WTC11 (cell line): ENCODE measurements at regions of chr14 and their contacts with region 1.

Region 1: GRCh38 chr14:67446120-67447032 is 34.4 kb upstream of the PLEK2 start:
- DNase-seq: no peak
- ATAC-seq: no peak
- H3K4me3 Mint-ChIP-seq: no peak overlapping the region
- H3K27ac Mint-ChIP-seq: no peak overlapping the region
- H3K4me1 Mint-ChIP-seq: peaks cover 53% of the 10 kb centered on the region
- H3K27me3 Mint-ChIP-seq: peaks cover 9% of the 10 kb centered on the region; the same call in 1 of the 2 replicates
- CTCF ChIP-seq: no peak

Region 2: DNA sequence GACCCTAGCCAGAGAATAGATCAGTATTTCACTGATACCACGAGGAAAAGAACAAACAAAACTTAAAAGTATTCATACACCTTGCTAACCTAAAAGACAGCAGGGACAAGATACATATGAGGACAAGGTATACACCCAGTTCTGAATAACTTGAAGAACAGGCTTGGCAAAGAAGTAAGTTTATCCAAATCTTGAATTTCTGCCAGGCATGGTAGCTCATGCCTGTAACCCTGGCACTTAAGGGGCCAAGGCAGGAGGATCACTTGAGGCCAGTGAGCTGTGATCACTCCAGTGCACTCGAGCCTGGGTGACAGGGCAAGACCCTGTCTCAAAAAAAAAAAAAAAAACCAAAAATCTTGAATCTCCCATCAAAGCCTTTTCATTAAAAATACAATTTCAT is 61.3 kb before region 1 on chr14:
- CTCF ChIA-PET with region 1: no interaction called
- POLR2A ChIA-PET with region 1: no interaction called
- DNase-seq: no peak
- ATAC-seq: no peak
- H3K4me3 Mint-ChIP-seq: no peak overlapping the region
- H3K27ac Mint-ChIP-seq: no peak overlapping the region
- H3K4me1 Mint-ChIP-seq: no peaks in the 10 kb centered on the region
- H3K27me3 Mint-ChIP-seq: no peaks in the 10 kb centered on the region
- CTCF ChIP-seq: no peak

Region 3: GRCh38 chr14:67435615-67436346 is 10.6 kb before region 1 on chr14:
- CTCF ChIA-PET with region 1: interaction called, 13 read pairs
- POLR2A ChIA-PET with region 1: no interaction called
- DNase-seq: no peak
- ATAC-seq: no peak
- H3K4me3 Mint-ChIP-seq: no peak overlapping the region
- H3K27ac Mint-ChIP-seq: no peak overlapping the region
- H3K4me1 Mint-ChIP-seq: no peaks in the 10 kb centered on the region
- H3K27me3 Mint-ChIP-seq: no peaks in the 10 kb centered on the region
- CTCF ChIP-seq: no peak

Region 4: GRCh38 chr14:67457782-67458181 is 11.4 kb after region 1 on chr14:
- CTCF ChIA-PET with region 1: interaction called, 12 read pairs
- POLR2A ChIA-PET with region 1: no interaction called
- DNase-seq: peak; percentile 61
- ATAC-seq: peak; percentile 96
- H3K4me3 Mint-ChIP-seq: no peak overlapping the region
- H3K27ac Mint-ChIP-seq: 0 out of 2 replicates have a peak overlapping the region, but pooled peaks have one; percentile 36
- H3K4me1 Mint-ChIP-seq: peaks cover 18% of the 10 kb centered on the region
- H3K27me3 Mint-ChIP-seq: peaks cover 10% of the 10 kb centered on the region; the same call in 1 of the 2 replicates
- CTCF ChIP-seq: no peak

Region 5: DNA sequence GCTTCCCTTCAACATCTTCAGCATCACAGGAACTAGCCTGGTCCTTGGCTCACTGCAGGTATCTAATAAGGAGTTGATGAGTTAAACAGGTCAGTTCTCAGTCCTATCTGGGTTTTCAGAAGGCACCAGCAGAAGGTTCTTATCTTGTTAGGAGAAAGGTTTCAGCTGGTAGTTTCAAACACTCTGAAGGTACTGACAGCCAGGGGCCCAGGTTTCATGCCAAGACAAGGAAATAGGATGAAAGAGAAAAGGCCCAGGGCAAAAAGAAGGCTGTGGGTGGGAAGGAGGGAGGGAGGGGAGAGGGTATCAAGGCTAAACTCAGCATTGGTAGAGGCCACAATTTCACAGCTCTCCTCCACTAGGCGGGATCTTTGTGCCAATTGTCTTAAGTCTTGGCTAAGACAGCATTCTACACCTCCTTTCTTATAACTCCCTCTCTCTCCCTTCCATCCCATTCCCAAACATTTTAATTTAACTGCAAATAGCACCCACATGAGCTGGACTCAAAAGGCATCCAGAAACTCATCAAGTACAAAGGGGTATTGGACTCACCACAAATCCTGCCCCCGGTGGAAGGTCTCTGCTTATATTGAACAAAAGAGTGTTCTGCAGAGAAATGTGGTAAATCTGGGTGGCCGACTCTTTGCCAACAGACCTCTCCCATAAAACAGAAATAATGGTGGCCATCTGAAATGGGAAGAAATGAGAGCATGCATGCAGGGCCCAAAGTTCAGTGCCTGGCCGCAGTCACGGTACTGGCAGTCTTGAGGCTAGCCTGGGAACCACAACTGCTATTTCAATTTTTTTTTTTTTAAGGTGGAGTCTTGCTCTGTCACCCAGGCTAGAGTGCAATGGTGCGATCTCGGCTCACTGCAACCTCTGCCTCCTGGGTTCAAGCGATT is 21.1 kb after region 1 on chr14:
- CTCF ChIA-PET with region 1: interaction called, 13 read pairs
- POLR2A ChIA-PET with region 1: no interaction called
- DNase-seq: no peak
- ATAC-seq: peak; percentile 44; the same call in 1 of the 2 replicates
- H3K4me3 Mint-ChIP-seq: no peak overlapping the region
- H3K27ac Mint-ChIP-seq: no peak overlapping the region
- H3K4me1 Mint-ChIP-seq: no peaks in the 10 kb centered on the region
- H3K27me3 Mint-ChIP-seq: no peaks in the 10 kb centered on the region; the same call in 1 of the 2 replicates
- CTCF ChIP-seq: no peak

Region 6: GRCh38 chr14:67541448-67542387 is 95.3 kb after region 1 on chr14:
- CTCF ChIA-PET with region 1: no interaction called
- POLR2A ChIA-PET with region 1: no interaction called
- DNase-seq: peak; percentile 67
- ATAC-seq: peak; percentile 91
- H3K4me3 Mint-ChIP-seq: peak overlapping the region; percentile 63
- H3K27ac Mint-ChIP-seq: peak overlapping the region; percentile 99
- H3K4me1 Mint-ChIP-seq: peaks cover 50% of the 10 kb centered on the region
- H3K27me3 Mint-ChIP-seq: no peaks in the 10 kb centered on the region
- CTCF ChIP-seq: no peak

Region 7: DNA sequence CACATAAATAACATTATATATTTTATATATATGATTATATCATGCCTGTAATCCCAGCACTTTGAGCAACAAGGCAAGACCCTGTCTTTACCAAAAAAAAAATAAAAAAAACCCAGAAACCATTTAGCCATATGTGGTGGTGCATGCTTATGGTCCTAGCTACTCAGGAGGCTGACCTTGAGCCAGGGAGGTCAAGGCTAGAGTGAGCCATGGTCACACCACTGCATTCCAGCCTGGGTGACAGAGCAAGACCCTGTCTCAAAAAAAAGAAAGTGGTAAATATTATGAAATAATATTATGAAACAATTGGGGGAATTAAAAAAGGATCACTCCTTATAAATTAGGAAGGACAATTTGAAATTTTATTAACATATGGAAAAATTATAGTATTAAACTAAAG is 389.2 kb after region 1 on chr14:
- CTCF ChIA-PET with region 1: interaction called, 10 read pairs
- POLR2A ChIA-PET with region 1: no interaction called
- DNase-seq: no peak
- ATAC-seq: no peak
- H3K4me3 Mint-ChIP-seq: no peak overlapping the region
- H3K27ac Mint-ChIP-seq: no peak overlapping the region
- H3K4me1 Mint-ChIP-seq: no peaks in the 10 kb centered on the region
- H3K27me3 Mint-ChIP-seq: no peaks in the 10 kb centered on the region
- CTCF ChIP-seq: no peak